Activated T-helper 1 cell treated with anti-CD3 and anti-CD28 coated beads, Interleukin-12 subunit alpha, Interleukin-12 subunit beta, Interleukin-2, Interleukin-4 antibody, amounts not matched to agents 30 ng/mL and 10 ng/mL and 1 ng/mL, durations not matched to agents 14 hours and 24 hours and 36 hours (primary cell): ENCODE measurements at regions of chr12 and their contacts with region 1.

Region 1: GRCh38 chr12:76548222-76548837 is 11.2 kb downstream of the OSBPL8 start:
- DNase-seq: no peak
- H3K4me3 Mint-ChIP-seq: no peak overlapping the region
- H3K27ac Mint-ChIP-seq: no peak overlapping the region
- H3K4me1 Mint-ChIP-seq: peaks cover 47% of the 10 kb centered on the region
- H3K27me3 Mint-ChIP-seq: no peaks in the 10 kb centered on the region

Region 2: DNA sequence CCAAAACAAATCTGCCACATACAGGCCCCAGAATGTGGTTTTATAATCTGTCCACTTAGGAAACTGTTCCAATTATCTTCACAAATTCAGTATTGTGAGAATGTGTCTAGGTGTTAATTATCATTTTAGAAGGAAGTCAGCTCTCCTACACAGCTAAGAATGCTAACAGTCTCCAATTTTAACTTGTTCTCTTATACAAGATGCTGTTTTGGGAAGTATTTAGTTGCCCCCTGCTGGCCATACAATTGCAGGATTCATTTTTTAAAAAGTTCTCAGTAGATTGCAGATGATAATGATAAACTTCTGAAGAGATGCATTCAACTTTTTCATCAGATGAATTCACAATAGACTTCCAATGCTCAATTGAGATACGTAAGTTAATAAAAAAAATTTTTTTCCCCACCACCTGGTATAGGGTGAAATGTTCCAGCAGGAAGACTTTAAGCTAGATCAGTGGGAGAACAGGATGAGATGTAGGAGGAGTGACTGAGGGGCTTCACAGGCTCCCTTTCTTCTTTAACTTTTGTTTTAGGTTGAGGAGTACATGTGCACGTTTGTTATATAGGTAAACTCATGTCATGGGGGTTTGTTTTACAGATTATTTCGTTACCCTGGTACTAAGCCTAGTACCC is 38.5 kb after region 1 on chr12:
- intact Hi-C with region 1: loop called (anchors 5 kb)
- DNase-seq: peak; percentile 7
- H3K4me3 Mint-ChIP-seq: no peak overlapping the region
- H3K27ac Mint-ChIP-seq: no peak overlapping the region
- H3K4me1 Mint-ChIP-seq: peaks cover 21% of the 10 kb centered on the region
- H3K27me3 Mint-ChIP-seq: peaks cover 2% of the 10 kb centered on the region